RWPE1 (cell line): ENCODE measurements at regions of chr4 and their contacts with region 1.

Region 1: DNA sequence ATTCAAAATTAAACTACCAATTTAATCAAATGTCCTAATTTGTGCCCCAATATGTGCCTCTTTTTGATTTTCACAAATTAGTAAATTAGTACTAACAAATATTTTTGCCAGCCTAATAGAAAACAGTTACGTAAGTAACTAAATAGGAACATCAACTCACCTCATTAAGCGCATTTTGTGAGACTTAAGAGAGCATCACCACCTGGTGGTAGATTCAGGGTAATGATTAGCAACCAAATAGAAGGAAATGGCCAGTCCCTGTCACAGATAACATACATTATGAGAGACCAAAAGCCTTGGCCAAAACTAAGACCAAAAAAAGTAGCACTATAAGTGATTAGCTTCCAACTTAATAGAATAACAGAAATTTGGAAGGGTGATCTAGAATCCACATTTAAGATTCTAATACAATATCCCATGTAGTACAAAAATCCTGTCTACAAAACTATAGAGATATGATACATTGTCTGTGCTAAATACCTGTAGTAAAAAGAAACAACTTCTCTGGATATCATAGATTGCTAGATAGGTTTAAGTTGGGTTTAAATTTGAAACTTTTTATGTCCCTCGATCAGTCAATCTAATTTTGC is 46.7 kb downstream of the C4orf46 start:
- DNase-seq: peak; percentile 54
- H3K27ac ChIP-seq: no peak overlapping the region
- CTCF ChIP-seq: peak; percentile 78

Region 2: DNA sequence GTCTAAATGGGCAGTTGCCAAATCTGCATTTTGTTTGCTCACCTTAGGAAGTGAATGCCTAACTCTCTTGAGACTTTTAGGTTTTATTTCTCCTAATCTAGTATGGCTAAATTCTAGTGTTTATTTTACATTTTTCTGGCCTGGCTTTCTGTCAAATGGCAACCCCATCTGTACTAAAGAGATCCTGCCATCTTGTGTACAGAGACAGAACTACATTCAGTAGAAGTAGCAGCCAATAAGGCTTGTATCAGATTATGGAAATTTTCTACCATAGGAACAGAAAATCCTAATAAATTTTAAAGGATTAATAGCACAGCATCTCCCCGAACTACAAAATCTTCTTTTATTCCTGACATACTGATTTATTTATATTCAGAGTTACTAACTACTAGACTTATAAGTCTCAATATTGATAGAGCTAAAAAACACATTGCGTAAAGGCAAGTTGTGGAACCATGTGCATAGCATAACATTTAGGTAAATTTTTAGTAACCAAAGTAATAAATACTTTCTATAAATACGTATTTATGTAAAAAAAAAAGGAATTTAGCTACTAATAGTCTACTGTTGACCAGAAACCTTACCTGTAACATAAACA is 369.2 kb before region 1 on chr4:
- CTCF ChIA-PET with region 1: interaction called, 11 read pairs
- POLR2A ChIA-PET with region 1: no interaction called
- DNase-seq: peak; percentile 43
- H3K27ac ChIP-seq: no peak overlapping the region
- CTCF ChIP-seq: peak; percentile 75

Region 3: DNA sequence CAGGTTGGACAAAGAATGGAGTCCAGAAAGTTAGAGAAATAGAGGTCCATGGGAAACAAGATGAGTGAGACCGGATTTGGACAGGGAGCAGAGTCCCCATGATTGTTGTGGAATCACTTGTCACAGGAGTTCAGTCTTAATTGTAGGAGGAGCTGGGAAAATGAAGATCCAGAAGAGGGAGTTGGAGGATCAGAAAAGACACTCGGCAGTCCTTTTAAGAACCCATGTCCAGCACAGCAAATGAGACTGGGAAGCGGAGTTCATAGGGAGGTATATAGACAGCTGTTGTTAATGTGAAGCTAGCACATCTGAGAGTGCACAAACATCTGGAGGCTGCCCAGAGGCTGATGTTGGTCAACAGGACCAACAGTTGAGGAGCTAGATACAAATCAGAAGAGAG is 214.7 kb before region 1 on chr4:
- CTCF ChIA-PET with region 1: interaction called, 11 read pairs
- POLR2A ChIA-PET with region 1: no interaction called
- DNase-seq: peak; percentile 20
- H3K27ac ChIP-seq: no peak overlapping the region
- CTCF ChIP-seq: no peak

Region 4: DNA sequence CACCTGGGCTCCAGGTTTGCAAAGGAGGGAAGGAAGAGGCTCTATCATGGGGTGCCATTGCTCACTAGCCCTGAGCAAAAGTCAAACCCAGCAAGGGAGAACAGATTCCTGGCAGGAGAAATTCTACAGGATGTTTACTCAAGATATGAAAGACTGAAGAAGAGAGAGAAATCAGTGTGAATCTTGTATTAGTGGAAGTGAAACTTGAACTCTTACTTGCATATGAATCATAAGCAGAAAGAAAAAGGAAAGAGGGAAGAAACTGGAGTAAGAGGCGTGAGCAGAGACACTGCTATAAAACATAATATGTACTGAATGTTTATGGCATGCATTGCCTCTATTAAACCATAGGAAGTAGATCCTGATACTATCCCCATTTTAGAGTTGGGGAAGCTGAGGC is 14.2 kb before region 1 on chr4:
- CTCF ChIA-PET with region 1: no interaction called
- POLR2A ChIA-PET with region 1: no interaction called
- DNase-seq: no peak
- H3K27ac ChIP-seq: no peak overlapping the region
- CTCF ChIP-seq: no peak

Region 5: GRCh38 chr4:158710814-158711213 is 85.8 kb after region 1 on chr4:
- CTCF ChIA-PET with region 1: no interaction called
- POLR2A ChIA-PET with region 1: no interaction called
- DNase-seq: no peak
- H3K27ac ChIP-seq: no peak overlapping the region
- CTCF ChIP-seq: peak; percentile 20; the same call in 1 of the 2 replicates